ENCODE measurements at regions of chr6 and their contacts with region 1.

Region 1: GRCh38 chr6:84422380-84422968 is 195.0 kb upstream of the CEP162 start:
- DNase-seq: peak; percentile 15 to 39
- ATAC-seq: peak in 7 of 8 donors; percentile 51 to 90 (median 78)
- H3K4me3 ChIP-seq: no peak overlapping the region
- H3K27ac ChIP-seq: no peak overlapping the region
- H3K4me1 ChIP-seq: no peaks in the 10 kb centered on the region
- H3K27me3 ChIP-seq: peaks cover 0 to 6% (median 0%) of the 10 kb centered on the region in 7 donors
- CTCF ChIP-seq: peak in 8 of 9 donors; percentile 24 to 65 (median 57)

Region 2: GRCh38 chr6:84652356-84653026 is 230.0 kb after region 1 on chr6:
- intact Hi-C with region 1: no loop called
- DNase-seq: no peak
- ATAC-seq: peak in 1 of 8 donors; percentile 16
- H3K4me3 ChIP-seq: no peak overlapping the region
- H3K27ac ChIP-seq: no peak overlapping the region
- H3K4me1 ChIP-seq: no peaks in the 10 kb centered on the region
- H3K27me3 ChIP-seq: no peaks in the 10 kb centered on the region
- CTCF ChIP-seq: no peak

Region 3: DNA sequence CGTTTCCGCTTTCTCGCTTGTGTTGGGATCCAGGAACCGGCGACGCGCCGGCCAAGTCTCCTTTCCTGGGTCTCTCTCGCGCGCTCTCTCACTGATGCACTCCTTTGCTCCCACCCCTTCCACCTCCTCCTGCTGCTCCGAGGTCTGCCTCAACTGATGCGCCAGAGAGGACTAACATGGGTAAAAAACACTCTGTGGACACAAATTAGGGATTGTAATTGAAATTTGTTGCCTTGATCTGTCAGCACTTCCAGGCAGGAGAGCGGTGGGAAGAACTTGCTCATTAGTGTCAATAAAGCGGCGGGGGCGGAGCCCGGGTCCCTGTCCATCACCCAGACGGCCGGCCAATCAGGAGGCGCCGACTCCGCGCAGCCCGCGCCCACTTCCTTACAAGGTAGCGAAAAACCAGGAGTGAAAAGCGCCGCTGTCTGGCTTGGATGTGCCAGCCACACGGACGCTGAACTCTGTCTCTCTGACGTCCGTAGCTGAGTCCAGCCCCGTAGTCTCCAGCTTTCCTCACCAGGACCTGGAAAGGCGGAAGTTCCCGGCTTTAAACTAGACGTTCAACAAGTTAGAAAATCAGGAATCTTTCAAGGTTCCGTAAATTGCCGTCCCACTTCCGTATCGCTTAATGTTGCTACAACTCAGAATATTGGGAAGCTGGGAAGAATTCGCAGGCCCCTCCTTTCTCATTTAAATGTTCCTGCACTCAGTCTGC is 342.0 kb after region 1 on chr6 and contains the start of gene TBX18:
- intact Hi-C with region 1: loop called in 4 of 10 experiments (anchors 5 to 10 kb)
- DNase-seq: peak; percentile 87 to 88
- ATAC-seq: peak; percentile 88 to 95 (median 92)
- H3K4me3 ChIP-seq: peak within 1 kb of the TSS; percentile 48 to 66 (median 58)
- H3K27ac ChIP-seq: peak within 1 kb of the TSS; percentile 56 to 89 (median 86)
- H3K4me1 ChIP-seq: peaks cover 0 to 15% (median 5%) of the 10 kb centered on the region in 9 donors
- H3K27me3 ChIP-seq: peaks cover 9 to 100% (median 95%) of the 10 kb centered on the region in 7 donors
- CTCF ChIP-seq: no peak
- total RNA-seq, gene TBX18: 1.7 to 9.1 (median 2.8) TPM